CD8-positive, alpha-beta T cell (primary cell): ENCODE measurements at regions of chr19 and their contacts with region 1.

Region 1: GRCh38 chr19:2602391-2603181 is 99.9 kb downstream of the GNG7 start:
- DNase-seq: no peak
- ATAC-seq: no peak
- H3K4me3 ChIP-seq: no peak overlapping the region
- H3K4me3 Mint-ChIP-seq: no peak overlapping the region
- H3K27ac ChIP-seq: no peak overlapping the region
- H3K27ac Mint-ChIP-seq: no peak overlapping the region
- H3K4me1 ChIP-seq: peaks cover 13% of the 10 kb centered on the region
- H3K4me1 Mint-ChIP-seq: peaks cover 13% of the 10 kb centered on the region
- H3K27me3 ChIP-seq: no peaks in the 10 kb centered on the region
- H3K27me3 Mint-ChIP-seq: no peaks in the 10 kb centered on the region
- CTCF ChIP-seq: no peak

Region 2: DNA sequence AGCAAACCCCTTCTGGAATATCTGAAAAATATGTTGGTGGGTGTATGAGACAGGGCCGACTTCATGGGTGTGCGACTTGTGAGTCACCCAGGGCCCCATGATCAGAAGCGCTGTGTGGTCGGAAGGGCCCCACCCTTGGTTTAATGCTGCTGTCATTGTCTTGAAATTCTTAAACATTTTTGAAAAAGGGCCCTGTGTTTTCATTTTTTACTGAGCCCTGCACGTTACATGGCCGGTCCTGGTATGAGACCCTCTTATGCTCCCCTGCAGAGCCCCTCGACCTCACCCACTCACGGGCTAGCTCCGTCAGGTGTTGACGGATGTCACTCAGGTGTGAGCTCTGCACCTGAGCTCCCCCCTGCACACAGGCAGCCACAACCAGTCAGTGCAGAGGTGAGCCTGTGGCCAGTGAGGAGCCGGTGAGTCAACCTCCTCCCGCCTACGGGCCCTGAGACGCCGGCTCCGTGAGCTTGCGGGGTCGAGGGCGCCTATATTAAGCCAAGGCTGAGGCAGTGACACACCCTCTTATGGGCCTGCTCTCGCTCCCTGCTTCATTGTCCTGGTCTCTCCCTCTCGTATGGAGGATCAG is 99.0 kb before region 1 on chr19:
- CTCF ChIA-PET with region 1: no interaction called
- POLR2A ChIA-PET with region 1: interaction called, 4 read pairs
- intact Hi-C with region 1: loop called in 1 of 2 experiments (anchors 1 kb)
- DNase-seq: peak; percentile 34 to 90 (median 81)
- ATAC-seq: peak; percentile 82
- H3K4me3 ChIP-seq: peak overlapping the region; percentile 28 to 31
- H3K4me3 Mint-ChIP-seq: peak overlapping the region; percentile 63
- H3K27ac ChIP-seq: peak overlapping the region; percentile 67 to 88
- H3K27ac Mint-ChIP-seq: peak overlapping the region; percentile 98
- H3K4me1 ChIP-seq: peaks cover 26% of the 10 kb centered on the region
- H3K4me1 Mint-ChIP-seq: peaks cover 27% of the 10 kb centered on the region
- H3K27me3 ChIP-seq: no peaks in the 10 kb centered on the region
- H3K27me3 Mint-ChIP-seq: no peaks in the 10 kb centered on the region
- CTCF ChIP-seq: no peak

Region 3: DNA sequence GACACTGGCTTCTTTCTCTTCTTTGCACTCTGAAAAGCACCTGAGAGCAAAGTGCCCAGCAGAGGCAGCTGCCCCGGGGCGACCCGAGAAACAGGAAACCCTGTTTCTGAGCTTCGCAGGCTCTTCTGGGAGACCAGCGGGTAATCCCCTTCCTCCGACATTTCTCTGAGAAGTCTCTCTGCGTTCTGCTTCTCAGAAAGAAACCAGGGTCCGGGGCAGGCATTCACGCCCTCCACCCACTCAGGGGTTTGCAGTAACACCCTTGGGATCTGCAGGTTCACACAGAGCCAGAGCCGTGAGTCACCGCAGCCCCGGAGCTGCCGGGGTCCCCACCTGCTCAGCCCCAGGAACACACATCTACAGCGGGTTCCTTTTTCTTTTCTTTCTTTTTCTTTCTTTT is 40.7 kb before region 1 on chr19:
- CTCF ChIA-PET with region 1: no interaction called
- POLR2A ChIA-PET with region 1: interaction called, 3 read pairs
- intact Hi-C with region 1: loop called in 1 of 2 experiments (anchors 1 kb)
- DNase-seq: peak; percentile 30 to 88 (median 72)
- ATAC-seq: peak; percentile 90
- H3K4me3 ChIP-seq: peak overlapping the region; percentile 65 to 89
- H3K4me3 Mint-ChIP-seq: peak overlapping the region; percentile 96
- H3K27ac ChIP-seq: peak overlapping the region; percentile 78 to 80
- H3K27ac Mint-ChIP-seq: peak overlapping the region; percentile 99
- H3K4me1 ChIP-seq: peaks cover 17% of the 10 kb centered on the region
- H3K4me1 Mint-ChIP-seq: peaks cover 14% of the 10 kb centered on the region
- H3K27me3 ChIP-seq: no peaks in the 10 kb centered on the region
- H3K27me3 Mint-ChIP-seq: no peaks in the 10 kb centered on the region
- CTCF ChIP-seq: no peak

Region 4: GRCh38 chr19:2578901-2579677 is 23.5 kb before region 1 on chr19:
- CTCF ChIA-PET with region 1: interaction called, 17 read pairs
- POLR2A ChIA-PET with region 1: interaction called, 4 read pairs
- intact Hi-C with region 1: no loop called
- DNase-seq: peak; percentile 44 to 81 (median 69)
- ATAC-seq: peak; percentile 54
- H3K4me3 ChIP-seq: peak overlapping the region; percentile 4 to 49
- H3K4me3 Mint-ChIP-seq: peak overlapping the region; percentile 45
- H3K27ac ChIP-seq: no peak overlapping the region
- H3K27ac Mint-ChIP-seq: no peak overlapping the region
- H3K4me1 ChIP-seq: peaks cover 11% of the 10 kb centered on the region
- H3K4me1 Mint-ChIP-seq: peaks cover 2% of the 10 kb centered on the region
- H3K27me3 ChIP-seq: peaks cover 0 to 5% of the 10 kb centered on the region in 2 experiments
- H3K27me3 Mint-ChIP-seq: no peaks in the 10 kb centered on the region
- CTCF ChIP-seq: peak; percentile 44